ENCODE measurements at regions of chr3 and their contacts with region 1.

Region 1: DNA sequence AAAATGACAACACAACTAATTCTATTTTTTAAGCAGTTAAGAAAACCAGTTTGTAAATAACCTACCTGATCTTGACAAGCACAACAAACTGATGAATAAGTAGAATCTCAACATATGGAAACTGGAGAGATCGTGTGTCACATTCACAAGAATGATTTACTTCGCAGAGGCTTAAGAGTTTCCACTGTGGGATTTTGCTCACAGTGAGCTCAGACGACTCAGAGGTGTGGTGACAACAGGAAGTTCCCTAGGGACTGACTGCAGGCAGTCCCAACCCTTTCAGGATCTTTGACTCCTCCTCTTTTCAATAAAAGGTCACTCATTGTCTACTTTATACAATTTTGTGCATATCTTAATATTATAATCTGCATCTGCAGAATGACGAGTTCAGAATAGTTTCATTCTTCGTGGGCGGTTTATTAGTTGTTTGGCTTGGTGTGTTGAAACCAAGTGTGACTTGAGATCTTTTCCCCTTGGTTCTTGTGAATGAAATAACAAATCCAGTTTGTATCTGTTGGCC is at the start of gene LIPH:
- DNase-seq: no peak
- ATAC-seq: no peak
- total RNA-seq, gene LIPH: 0.13 to 0.41 TPM

Region 2: GRCh38 chr3:185353823-185354614 is 198.4 kb before region 1 on chr3:
- intact Hi-C with region 1: loop called in 1 of 2 experiments (anchors 10 kb)
- DNase-seq: peak; percentile 58
- ATAC-seq: peak; percentile 76 to 82

Region 3: DNA sequence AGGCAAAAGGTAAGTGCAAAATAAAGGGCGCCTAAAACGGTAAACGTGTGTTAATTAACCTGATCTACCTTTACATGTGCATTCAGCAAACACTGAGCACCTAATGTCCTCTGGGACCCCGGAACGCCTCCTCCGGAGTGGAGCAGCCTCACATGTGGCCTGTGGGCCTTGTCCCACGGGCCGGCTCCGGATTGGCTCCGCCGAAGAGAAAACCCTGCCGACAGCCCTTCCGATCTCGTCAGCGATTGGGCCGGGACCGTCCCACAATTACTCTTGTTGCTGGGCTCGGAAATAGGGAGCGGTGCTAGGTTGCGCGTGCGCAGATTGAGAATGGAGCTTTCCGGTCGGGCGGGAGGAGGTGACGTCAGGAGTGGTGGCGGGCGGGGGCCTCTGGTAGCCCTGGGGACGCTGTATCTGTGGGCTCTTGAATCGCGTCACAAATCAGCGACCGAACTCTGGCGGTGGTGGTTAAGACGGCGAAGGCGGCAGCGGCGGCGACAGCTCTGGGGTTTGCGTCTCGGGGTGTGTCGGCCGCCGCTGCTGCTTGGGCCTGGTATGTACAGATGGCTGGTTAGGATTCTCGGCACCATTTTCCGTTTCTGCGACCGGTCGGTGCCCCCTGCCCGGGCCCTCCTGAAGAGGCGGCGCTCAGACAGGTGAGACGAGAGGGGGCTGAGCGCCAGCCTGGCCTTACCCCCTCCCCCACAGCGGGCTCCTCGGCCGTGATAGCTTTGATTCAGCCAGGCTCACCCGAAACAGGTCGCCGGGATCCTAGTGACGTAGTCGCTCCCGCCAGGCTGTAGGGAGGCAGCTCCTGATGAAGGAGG is 33.7 kb after region 1 on chr3 and contains the start of gene SENP2:
- intact Hi-C with region 1: no loop called
- DNase-seq: peak; percentile 99
- ATAC-seq: peak; percentile 98
- total RNA-seq, gene SENP2: 25.4 to 28.9 TPM

Region 4: DNA sequence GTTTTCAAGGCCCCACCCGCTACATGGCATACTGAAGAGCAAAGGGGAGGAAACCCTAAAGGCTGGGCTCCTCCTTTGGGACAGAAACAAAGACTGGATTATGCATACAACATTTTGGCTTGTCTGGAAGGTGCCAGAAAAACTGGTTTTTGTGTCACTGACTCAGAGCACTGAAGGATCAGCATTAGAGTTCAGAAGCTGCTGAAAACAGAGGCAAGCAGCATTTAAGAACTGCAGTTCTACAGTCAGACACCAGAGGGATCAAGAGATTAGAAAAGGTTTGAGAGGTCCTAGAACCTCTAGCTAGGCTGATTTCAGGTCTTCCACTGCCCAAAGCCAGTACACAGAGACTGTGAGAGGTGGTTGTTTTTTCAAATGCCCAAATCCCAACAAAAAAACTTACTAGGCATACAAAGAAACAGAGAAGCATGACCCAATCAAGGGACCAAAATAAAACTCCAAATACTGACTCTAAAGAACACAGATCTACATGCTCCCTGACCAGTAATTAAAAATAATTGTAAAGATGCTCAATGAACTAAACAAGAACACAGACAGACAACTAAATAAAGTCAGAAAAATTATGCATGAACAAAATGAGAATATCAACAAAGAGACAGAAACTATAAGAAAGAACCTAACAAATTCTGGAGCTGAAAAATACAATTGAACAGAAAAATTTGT is 124.9 kb after region 1 on chr3:
- intact Hi-C with region 1: no loop called
- DNase-seq: no peak
- ATAC-seq: peak in 1 of 2 donors; percentile 59

Region 5: DNA sequence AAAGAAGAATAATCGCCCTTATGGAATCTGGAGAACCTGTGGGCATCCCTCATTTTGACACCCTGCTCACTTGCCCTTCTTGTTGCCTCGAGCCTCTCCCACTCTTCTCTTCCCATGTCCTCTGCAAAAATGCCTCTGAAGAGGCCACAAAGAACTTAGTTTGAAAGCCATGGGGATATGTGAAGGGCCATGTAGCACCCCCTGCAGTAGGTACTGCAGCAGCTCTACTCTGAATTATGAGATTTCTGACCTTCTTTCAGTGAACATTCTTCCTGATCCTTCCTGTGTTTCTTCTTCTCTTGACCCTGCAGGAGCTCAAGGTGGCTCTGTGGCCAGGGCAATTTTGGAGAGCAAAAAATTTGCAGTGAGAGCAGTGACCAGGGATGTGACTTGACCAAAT is 415.8 kb after region 1 on chr3:
- intact Hi-C with region 1: no loop called
- DNase-seq: no peak
- ATAC-seq: no peak

Measured in left cardiac atrium (tissue), 4 donors.